ENCODE measurements at regions of chr1 and their contacts with region 1.

Region 1: DNA sequence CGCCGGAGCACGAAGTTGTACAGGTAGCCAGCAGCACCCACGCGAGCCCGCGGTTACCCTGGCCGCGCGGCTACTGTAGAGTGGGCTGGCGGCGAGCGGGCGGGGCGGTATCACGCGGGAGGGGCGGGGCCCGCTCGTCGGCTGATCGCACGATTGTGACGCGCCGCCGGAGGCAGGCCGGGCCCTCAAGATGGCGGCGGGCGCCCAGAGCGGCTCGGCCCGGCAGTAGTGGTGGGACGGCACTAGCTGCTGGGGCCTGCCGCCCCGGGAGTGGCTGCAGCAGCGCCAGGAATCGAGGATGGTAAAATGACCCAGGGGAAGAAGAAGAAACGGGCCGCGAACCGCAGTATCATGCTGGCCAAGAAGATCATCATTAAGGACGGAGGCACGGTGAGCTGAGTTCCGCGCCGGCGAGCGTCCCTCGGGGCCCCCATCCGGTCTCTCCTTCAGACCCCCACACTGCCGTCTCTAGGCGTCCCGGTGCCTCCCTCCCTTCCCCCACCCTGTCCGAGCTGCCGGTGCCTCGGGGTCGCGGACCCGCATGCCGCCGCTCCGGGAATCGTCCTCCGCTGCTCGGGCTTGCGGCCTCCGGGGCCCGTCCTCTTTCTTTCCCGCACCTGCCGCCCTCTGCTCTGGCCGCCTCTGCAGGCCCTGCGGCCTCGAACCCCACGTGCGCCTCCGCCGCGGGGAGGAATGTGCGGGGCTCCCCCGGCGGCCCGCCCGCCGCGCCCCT is 68.3 kb downstream of the SLC35A3 start:
- DNase-seq: peak; percentile 86
- H3K4me3 Mint-ChIP-seq: peak overlapping the region; percentile 98
- H3K27ac Mint-ChIP-seq: peak overlapping the region; percentile 99
- H3K4me1 Mint-ChIP-seq: peaks cover 50% of the 10 kb centered on the region
- H3K27me3 Mint-ChIP-seq: no peaks in the 10 kb centered on the region

Region 2: GRCh38 chr1:99808391-99809115 is 229.5 kb before region 1 on chr1:
- intact Hi-C with region 1: loop called (anchors 1 kb)
- DNase-seq: no peak
- H3K4me3 Mint-ChIP-seq: no peak overlapping the region
- H3K27ac Mint-ChIP-seq: peak overlapping the region; percentile 47
- H3K4me1 Mint-ChIP-seq: peaks cover 17% of the 10 kb centered on the region
- H3K27me3 Mint-ChIP-seq: peaks cover 17% of the 10 kb centered on the region

Region 3: DNA sequence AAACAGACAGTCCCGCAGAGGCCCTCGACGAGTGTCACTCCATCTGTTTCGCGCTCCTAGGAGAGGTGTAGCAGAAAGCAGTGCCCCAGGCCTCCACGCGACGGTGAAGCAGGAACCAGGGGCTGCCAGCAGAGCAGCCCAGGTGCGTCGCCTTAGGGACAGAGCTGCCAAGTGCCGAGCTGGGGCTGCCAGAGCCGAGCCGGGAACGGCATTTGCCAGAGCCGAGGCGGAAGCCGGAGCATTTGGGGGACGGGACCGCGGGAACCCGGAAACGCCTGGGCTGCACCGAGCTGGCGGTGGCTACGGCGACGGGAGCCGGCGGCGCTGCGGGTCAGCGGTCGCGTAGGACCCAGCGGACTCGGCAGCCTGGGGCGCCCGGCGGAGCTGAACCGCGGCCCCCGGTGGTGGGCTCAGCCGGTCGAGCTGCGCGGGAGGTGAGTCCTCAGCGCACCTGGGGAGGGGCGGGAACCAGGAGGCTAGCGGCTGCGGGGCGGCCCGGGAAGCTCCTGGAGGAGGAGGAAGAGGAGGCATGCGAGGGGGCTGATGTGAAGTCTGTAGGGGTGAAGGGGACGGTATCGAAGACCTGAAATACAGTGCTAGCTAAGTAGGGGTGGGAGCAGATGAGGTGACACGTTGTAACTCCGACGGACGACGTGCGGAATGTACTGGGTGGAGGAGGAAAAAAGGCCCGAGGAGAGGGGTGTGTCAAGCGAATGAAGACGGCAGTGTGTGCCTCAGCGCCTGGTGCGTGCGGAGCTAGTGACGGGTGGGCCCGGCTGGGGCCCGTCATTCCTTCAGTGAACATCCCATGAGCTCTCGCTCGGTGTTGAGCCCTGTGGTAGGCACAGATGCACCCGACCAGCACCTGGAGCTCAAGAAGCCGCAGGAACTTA is 68.1 kb before region 1 on chr1 and contains the start of gene SLC35A3:
- intact Hi-C with region 1: loop called (anchors 1 kb)
- DNase-seq: peak; percentile 76
- H3K4me3 Mint-ChIP-seq: peak within 1 kb of the TSS; percentile 98
- H3K27ac Mint-ChIP-seq: peak within 1 kb of the TSS; percentile 92
- H3K4me1 Mint-ChIP-seq: peaks cover 22% of the 10 kb centered on the region
- H3K27me3 Mint-ChIP-seq: no peaks in the 10 kb centered on the region
- total RNA-seq, gene SLC35A3: 15.0 and 15.9 TPM in 2 replicates

Region 4: GRCh38 chr1:100265931-100266740 is 228.0 kb after region 1 on chr1 and contains the start of gene RTCA:
- intact Hi-C with region 1: loop called (anchors 2 kb)
- DNase-seq: peak; percentile 93
- H3K4me3 Mint-ChIP-seq: peak within 1 kb of the TSS; percentile 99
- H3K27ac Mint-ChIP-seq: peak within 1 kb of the TSS; percentile 99
- H3K4me1 Mint-ChIP-seq: peaks cover 25% of the 10 kb centered on the region
- H3K27me3 Mint-ChIP-seq: no peaks in the 10 kb centered on the region
- total RNA-seq, gene RTCA: 53.4 and 55.7 TPM in 2 replicates

Region 5: DNA sequence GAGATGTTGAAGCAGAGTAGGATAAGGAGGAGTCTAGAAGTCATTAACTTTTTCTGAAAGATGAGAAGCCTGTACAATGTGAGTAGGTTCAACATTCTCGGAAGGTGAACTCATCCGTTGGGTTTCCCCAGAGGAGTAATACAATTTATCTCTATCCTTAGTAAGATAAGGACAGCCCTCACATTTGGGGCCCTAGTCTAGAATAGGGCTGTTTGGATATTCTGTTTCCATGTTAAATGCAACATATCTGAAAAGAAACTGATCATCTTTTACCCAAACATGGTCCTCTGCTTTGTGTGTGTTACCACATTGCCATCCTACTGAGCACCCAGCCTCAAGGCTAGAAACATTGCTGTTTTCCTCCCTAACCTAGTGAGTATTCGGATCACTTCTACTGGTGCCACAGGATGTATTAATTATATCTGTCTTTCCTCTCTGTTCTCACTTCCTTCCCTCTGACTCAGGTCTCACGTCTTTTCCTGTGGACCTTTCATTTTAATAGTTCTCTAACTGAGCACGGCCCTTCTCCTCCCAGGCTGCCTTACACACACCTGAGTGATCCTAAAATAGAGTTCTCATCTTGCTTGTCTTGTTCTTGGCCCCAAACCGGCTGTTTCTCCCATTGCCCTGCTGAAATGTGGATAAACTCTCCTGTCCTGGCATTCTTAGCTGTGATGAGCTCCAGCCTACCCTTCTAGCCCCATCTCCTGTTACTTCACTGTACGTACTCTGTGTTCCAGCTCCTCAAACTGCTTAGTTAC is 405.9 kb after region 1 on chr1:
- intact Hi-C with region 1: loop called (anchors 1 kb)
- DNase-seq: peak; percentile 21
- H3K4me3 Mint-ChIP-seq: peak overlapping the region; percentile 68
- H3K27ac Mint-ChIP-seq: peak overlapping the region; percentile 92
- H3K4me1 Mint-ChIP-seq: peaks cover 75% of the 10 kb centered on the region
- H3K27me3 Mint-ChIP-seq: no peaks in the 10 kb centered on the region

Region 6: DNA sequence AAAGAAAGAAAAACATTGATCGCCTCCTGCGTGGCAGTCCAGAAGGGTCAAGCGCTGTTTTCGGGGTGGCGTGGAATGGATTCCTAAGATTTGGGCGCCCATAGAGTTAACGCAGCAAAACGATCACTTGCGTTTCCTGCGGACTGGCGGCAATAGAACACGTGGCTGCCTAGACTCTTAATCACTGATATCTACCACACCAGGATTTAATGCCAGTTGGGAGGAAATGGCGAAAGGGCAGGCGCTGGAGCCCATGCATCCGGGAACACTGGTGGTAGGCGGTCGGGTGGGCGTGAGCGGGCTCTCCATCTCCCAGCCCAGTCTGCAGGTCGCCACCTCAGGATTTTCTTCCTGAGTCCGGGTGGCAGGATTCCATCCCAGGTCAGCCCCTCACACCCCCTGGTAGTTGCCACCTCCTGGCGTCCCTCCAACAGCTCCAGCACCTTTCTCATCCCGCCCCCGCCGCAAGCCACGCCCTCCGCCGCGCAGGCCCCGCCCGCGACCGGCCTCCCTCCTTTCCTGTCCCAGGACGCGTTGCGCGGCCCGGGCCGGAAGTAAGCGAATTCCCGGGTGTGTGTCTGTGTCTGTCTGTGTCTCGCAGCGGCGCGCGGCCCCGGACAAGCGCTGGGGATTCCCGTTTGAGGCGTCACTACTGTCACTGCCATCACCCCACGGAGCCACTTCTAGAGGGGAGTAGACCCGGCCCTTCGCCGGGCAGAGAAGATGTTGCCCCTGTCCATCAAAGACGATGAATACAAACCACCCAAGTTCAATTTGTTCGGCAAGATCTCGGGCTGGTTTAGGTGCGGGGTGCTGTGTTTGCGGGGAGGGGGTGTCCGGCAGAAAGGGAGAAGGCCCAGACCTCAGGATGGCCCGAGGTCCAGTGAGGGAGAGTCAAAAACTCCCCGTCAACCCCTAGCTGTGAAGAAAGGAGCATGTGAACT is 857.7 kb after region 1 on chr1 and contains the start of gene SLC30A7:
- intact Hi-C with region 1: loop called (anchors 5 kb)
- DNase-seq: peak; percentile 92
- H3K4me3 Mint-ChIP-seq: peak within 1 kb of the TSS; percentile 95
- H3K27ac Mint-ChIP-seq: peak within 1 kb of the TSS; percentile 97
- H3K4me1 Mint-ChIP-seq: peaks cover 41% of the 10 kb centered on the region
- H3K27me3 Mint-ChIP-seq: no peaks in the 10 kb centered on the region
- total RNA-seq, gene SLC30A7: 38.6 and 39.4 TPM in 2 replicates